WTC11 (cell line): ENCODE measurements at regions of chr12 and their contacts with region 1.

Region 1: GRCh38 chr12:86914716-86915115 is 658.5 kb upstream of the MGAT4C start:
- DNase-seq: peak; percentile 22
- ATAC-seq: peak; percentile 84
- H3K4me3 Mint-ChIP-seq: no peak overlapping the region
- H3K27ac Mint-ChIP-seq: no peak overlapping the region
- H3K4me1 Mint-ChIP-seq: peaks cover 24% of the 10 kb centered on the region
- H3K27me3 Mint-ChIP-seq: peaks cover 23% of the 10 kb centered on the region
- CTCF ChIP-seq: peak; percentile 34; the same call in 1 of the 2 replicates

Region 2: GRCh38 chr12:86052921-86053320 is 861.8 kb before region 1 on chr12:
- CTCF ChIA-PET with region 1: no interaction called
- POLR2A ChIA-PET with region 1: interaction called, 11 read pairs
- DNase-seq: no peak
- ATAC-seq: no peak
- H3K4me3 Mint-ChIP-seq: no peak overlapping the region
- H3K27ac Mint-ChIP-seq: no peak overlapping the region
- H3K4me1 Mint-ChIP-seq: no peaks in the 10 kb centered on the region
- H3K27me3 Mint-ChIP-seq: no peaks in the 10 kb centered on the region
- CTCF ChIP-seq: no peak

Region 3: GRCh38 chr12:86903159-86903558 is 11.6 kb before region 1 on chr12:
- CTCF ChIA-PET with region 1: interaction called, 11 read pairs
- POLR2A ChIA-PET with region 1: no interaction called
- DNase-seq: no peak
- ATAC-seq: no peak
- H3K4me3 Mint-ChIP-seq: no peak overlapping the region
- H3K27ac Mint-ChIP-seq: no peak overlapping the region
- H3K4me1 Mint-ChIP-seq: no peaks in the 10 kb centered on the region
- H3K27me3 Mint-ChIP-seq: no peaks in the 10 kb centered on the region
- CTCF ChIP-seq: no peak

Region 4: DNA sequence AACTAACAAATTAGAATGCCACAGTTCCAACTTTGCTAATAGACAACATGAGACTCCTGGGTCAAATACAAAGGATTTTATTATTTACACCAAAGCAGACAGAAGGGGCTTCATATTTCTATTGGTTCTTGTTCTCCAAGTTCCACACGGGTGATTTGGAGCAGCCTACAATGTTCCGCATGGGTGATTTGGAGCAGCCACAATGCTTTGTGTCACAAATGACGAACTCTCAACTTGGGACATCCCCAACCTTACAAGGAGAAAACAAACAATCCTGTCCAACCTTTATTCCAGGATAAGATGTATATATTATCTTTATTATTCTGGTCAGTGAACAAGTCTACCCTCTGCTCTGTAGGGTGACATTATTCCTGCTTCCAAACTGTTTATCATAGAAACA is 35.7 kb after region 1 on chr12:
- CTCF ChIA-PET with region 1: no interaction called
- POLR2A ChIA-PET with region 1: no interaction called
- DNase-seq: no peak
- ATAC-seq: no peak
- H3K4me3 Mint-ChIP-seq: no peak overlapping the region
- H3K27ac Mint-ChIP-seq: no peak overlapping the region
- H3K4me1 Mint-ChIP-seq: peaks cover 56% of the 10 kb centered on the region
- H3K27me3 Mint-ChIP-seq: no peaks in the 10 kb centered on the region
- CTCF ChIP-seq: no peak